Activated CD4-positive, alpha-beta memory T cell treated with anti-CD3 and anti-CD28 coated beads, Interleukin-2, amount 10 ng/mL, durations not matched to agents 7 days and 5 days (primary cell): ENCODE measurements at regions of chr17 and their contacts with region 1.

Region 1: DNA sequence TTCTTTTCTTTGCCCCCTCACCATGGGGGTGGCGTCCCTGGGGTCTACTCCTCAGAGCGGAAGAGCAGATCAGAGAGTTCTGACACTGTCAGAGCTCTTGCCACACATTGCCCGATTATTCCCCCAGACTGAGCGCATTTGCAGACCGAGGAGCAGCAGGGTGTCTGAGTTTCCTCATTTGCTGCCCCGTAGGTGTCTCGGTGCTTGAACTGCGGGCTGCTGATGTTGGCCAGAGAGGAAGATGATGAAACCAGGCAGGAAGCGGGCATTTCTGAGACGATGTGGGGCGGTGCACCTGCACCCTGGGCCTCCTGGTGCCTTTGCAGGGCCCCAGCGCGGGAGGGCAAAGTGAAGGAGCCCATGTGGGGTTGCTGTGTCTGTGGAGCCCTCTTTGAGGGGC is 55.2 kb downstream of the ARSG start:
- DNase-seq: peak; percentile 88
- H3K4me3 Mint-ChIP-seq: peak overlapping the region; percentile 67
- H3K27ac Mint-ChIP-seq: peak overlapping the region; percentile 96
- H3K4me1 Mint-ChIP-seq: peaks cover 78% of the 10 kb centered on the region
- H3K27me3 Mint-ChIP-seq: no peaks in the 10 kb centered on the region

Region 2: DNA sequence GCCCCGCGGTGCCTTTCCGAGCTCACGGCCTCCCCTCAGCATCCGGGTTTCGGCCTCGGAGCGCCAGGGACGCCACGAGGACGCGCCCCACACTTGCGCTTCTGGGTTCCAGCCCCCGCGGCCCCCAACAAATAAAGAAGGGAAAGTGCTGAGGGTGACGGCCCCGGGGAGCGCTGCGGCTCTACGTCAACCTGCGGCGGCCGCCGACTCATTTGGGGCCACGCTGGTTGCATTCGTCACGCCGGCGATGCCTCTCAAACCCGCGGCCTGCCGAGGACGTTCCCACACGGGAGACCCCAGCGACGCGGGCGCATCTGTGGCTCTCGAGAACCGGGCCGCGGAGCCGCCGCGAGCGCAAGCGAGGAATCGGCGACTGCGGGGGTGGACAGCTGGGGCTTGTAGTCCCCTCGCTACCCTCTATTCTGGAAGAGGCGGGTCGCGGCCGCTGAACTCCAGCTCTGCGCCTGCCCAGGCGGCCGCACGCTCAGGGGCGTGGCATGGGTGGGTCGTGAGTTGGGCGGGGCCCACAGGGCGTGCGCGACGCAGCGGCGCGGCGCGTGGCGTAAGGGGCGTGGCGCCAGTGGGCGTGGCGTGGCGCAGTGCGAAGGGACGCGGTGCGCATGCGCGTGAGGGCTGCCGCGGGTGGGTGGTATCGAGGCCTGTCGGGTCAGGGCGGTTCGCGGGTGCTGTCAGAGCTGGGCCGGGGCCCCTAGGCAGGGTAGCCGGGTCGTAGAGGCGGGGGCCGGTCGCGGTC is 98.8 kb before region 1 on chr17 and contains the start of gene AMZ2:
- CTCF ChIA-PET with region 1: no interaction called
- POLR2A ChIA-PET with region 1: interaction called, 23 read pairs
- DNase-seq: peak; percentile 97
- H3K4me3 Mint-ChIP-seq: peak within 1 kb of the TSS; percentile 85
- H3K27ac Mint-ChIP-seq: peak within 1 kb of the TSS; percentile 90
- H3K4me1 Mint-ChIP-seq: peaks cover 42% of the 10 kb centered on the region
- H3K27me3 Mint-ChIP-seq: no peaks in the 10 kb centered on the region
- total RNA-seq, gene AMZ2: 106 to 121 TPM

Region 3: DNA sequence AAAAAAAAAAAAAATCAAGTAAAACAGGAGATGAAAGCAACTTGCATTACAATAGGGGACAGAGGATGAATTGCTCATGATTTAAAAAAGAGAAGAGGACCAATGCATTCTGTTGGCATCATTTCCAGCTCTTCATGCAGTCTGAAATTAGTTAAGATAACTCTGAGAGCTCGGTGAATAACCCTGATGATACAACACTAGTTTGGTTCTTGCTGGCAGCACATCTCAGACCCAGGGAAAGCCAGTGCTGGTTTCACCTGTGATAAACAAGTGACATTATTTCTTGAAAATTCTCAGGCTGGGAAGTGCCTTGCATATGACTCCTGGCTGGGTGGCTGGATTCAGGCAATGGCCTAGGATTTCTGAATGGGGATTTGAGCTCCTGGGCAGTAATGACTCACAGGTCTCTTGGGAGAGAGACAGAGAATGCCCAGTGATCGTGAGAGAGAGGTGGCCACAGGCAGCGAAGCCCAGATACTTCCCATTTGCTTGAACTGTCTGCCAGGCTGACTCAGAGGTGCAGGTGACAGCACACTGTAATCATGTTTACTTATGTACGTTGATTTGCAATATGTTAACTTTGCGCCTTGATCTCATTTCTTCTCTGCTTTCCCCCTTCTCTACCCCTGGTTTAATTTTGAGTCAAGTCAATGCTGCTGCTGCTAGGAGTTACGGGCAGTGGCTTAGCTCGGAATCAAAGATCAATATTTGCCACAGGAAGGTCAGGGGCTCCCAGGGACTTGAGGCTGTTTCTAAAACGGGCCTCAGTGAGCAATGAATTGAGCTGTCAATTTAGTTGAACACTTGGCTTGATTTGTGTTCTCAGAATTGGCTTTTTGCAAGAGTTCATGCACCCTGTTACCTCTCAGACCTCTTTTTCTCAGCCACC is 28.1 kb before region 1 on chr17:
- CTCF ChIA-PET with region 1: interaction called, 7 read pairs
- POLR2A ChIA-PET with region 1: interaction called, 21 read pairs
- DNase-seq: no peak
- H3K4me3 Mint-ChIP-seq: no peak overlapping the region
- H3K27ac Mint-ChIP-seq: no peak overlapping the region
- H3K4me1 Mint-ChIP-seq: peaks cover 40% of the 10 kb centered on the region
- H3K27me3 Mint-ChIP-seq: no peaks in the 10 kb centered on the region

Region 4: DNA sequence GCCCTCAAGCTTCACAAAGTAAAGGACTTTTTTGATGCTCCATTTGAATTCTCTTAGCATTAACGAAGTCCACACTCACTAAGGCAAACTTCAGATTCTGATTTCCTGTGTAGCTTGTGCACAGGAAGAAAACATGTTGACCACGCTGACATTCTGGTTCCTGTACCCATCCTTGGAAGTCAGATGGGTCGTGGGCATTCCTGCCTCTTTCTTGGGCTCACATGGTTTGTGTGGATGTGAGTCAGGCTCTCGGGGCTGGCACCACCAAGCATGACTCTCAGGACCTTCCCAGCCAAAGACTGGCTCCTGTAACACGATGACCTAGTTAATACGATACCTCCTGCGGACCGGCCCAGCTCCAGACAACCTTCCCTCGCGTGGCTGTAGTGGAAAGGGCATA is 22.3 kb before region 1 on chr17:
- CTCF ChIA-PET with region 1: interaction called, 9 read pairs
- POLR2A ChIA-PET with region 1: interaction called, 12 read pairs
- DNase-seq: no peak
- H3K4me3 Mint-ChIP-seq: no peak overlapping the region
- H3K27ac Mint-ChIP-seq: no peak overlapping the region
- H3K4me1 Mint-ChIP-seq: peaks cover 25% of the 10 kb centered on the region
- H3K27me3 Mint-ChIP-seq: no peaks in the 10 kb centered on the region

Region 5: DNA sequence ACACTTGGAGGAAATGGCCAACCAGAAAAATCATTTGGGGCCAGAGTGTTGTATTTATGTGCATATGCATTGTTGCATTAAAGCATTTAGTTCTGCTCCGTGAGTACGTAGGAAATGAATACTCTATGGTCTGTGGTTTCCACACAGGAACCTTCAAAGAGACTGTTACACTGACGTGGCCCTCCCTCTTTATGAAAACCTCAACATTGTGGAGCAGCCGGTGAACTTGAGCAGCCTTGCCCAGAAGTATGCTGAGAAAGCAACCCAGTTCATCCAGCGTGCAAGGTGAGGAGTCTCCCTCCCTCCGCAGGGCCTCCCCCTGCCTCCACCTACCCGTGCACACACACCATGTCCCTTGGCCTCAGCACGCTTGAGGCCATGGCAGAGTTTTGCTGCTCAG is 10.1 kb after region 1 on chr17:
- CTCF ChIA-PET with region 1: interaction called, 22 read pairs
- POLR2A ChIA-PET with region 1: interaction called, 42 read pairs
- DNase-seq: peak; percentile 85
- H3K4me3 Mint-ChIP-seq: peak overlapping the region; percentile 66
- H3K27ac Mint-ChIP-seq: peak overlapping the region; percentile 96
- H3K4me1 Mint-ChIP-seq: peaks cover 71% of the 10 kb centered on the region
- H3K27me3 Mint-ChIP-seq: no peaks in the 10 kb centered on the region

Region 6: DNA sequence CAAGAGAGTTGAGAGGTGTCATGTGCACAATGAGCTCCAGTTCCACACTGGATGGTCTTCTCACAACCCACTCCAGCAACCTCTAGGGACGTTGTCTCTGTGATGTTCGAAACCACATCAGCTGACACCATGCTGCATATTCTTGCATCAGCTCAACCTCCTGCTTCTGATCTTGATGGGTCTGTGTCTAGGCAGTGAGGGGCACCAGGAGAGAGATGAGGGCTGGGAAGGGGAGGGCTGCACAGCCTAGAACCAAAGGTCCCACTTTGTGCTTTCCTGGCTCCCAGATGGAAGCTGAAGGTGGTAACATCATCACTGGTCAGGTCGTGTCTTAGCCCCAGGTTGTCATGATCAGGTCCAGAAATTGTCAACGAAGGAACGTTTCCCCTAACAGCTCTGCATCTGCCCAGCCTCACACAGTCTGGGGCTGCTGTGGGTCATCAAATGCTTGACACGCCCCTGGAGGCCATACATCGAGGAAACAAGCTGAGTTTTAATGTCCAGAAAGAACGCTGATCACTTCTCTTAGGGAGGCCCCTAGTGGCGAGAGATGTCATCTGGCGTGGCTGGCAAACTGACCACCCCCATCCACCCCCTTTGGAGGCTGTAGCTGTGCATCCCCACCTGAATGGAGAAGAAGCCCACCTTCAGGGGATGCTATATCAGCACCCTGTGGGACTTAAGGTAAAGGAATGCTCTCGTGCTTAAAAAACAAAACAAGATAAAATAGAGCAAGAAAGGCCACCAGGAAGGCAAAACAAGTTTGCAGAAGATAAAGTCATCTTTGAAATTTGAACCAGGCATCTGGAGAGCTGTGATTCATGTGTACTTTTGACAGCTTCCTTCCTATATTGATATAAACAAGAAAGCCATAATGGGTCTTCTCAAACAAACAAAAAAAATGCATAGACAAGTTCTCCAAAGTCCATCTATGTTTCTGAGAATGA is 52.5 kb after region 1 on chr17:
- CTCF ChIA-PET with region 1: interaction called, 6 read pairs
- POLR2A ChIA-PET with region 1: interaction called, 10 read pairs
- DNase-seq: peak; percentile 49
- H3K4me3 Mint-ChIP-seq: no peak overlapping the region
- H3K27ac Mint-ChIP-seq: peak overlapping the region; percentile 79
- H3K4me1 Mint-ChIP-seq: peaks cover 40% of the 10 kb centered on the region
- H3K27me3 Mint-ChIP-seq: no peaks in the 10 kb centered on the region